ENCODE measurements at regions of chr9 and their contacts with region 1.

Region 1: DNA sequence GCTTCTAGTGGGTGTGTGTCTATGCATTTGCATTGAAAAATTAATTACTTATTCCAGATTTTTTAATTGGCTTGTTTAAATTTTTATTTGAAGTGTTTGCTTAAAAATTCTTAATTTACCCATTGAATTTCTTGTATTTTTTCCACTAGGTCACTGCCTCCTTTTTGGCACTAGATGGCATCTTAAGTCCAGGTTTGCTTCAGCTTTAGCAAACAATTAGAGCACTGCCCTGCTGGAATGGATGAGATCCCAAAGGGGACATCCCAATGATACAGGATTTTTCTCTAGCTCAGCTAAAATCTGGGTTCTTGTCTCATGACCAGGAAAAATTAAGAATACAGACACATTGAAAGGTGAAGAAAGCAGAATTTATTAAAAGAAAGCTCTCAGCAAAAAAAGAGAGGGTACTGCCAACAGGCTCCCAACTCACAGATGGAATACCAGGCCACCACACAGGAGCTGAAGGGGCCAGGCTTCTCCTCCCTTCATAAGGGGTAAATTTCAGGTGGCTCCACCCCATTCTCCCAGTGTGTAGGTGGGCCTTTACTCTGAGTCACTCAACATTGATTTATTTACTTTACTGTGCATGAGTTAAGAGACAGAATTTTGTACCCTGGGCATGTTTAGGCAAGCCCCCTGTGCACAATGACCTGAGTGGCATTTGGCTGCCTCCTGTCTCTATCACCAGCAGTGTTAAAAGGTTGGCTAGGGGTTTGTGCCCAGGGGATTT is 532.4 kb downstream of the ANXA1 start:
- DNase-seq: no peak
- ATAC-seq: peak; percentile 94
- H3K4me3 Mint-ChIP-seq: no peak overlapping the region
- H3K27ac Mint-ChIP-seq: peak overlapping the region; percentile 60; the same call in 1 of the 2 replicates
- H3K4me1 Mint-ChIP-seq: peaks cover 12% of the 10 kb centered on the region
- H3K27me3 Mint-ChIP-seq: no peaks in the 10 kb centered on the region
- CTCF ChIP-seq: peak; percentile 52

Region 2: DNA sequence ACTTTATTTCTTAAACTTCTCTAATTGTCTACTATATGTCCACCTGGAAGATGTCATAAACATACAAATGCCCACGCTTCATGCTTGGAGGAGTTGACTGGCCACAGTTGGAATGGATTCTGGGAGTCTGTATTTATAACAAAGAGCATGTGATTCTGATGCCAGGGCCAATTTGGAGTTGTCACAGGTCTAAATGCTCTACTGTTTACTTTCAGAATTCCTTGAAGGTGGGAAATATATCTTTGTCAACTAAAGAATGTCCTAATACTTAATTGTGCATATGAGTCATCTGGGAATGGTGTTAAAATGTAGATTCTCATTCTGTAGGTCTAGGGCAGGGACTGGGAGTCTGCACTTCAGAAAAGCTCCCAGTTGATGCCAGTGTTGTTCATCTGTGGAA is 336.3 kb before region 1 on chr9:
- CTCF ChIA-PET with region 1: no interaction called
- POLR2A ChIA-PET with region 1: no interaction called
- DNase-seq: no peak
- ATAC-seq: no peak
- H3K4me3 Mint-ChIP-seq: no peak overlapping the region
- H3K27ac Mint-ChIP-seq: no peak overlapping the region
- H3K4me1 Mint-ChIP-seq: no peaks in the 10 kb centered on the region
- H3K27me3 Mint-ChIP-seq: no peaks in the 10 kb centered on the region
- CTCF ChIP-seq: no peak

Region 3: DNA sequence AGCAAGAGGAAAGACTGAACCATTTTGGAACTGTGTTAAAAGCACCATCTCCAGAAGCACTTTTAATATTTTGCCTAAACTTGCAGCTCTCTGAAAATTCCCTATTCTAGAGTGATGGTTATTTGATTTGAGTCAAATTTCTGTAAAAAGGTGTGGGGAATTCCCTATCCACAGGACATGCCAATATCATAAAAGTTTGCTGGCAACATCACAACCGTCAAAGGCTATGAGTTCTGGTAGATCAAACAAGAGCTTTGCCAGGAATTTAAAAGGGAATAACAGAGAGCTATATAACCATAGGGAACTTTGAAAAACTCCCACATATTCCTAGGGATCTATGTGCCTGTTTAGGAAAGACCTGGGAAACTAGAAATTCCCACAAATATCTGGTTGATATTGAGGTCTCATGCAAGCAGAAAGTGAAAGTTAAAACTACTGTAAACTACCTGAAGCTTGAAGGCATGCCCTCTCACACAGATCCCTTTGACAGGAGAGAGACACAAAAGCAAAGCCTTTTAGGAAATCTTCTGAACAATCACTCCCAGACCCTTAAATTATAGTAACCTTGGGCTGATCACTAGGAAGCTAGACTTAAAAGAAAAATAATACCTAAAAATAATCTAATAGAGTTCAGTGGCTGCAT is 17.5 kb after region 1 on chr9:
- CTCF ChIA-PET with region 1: no interaction called
- POLR2A ChIA-PET with region 1: no interaction called
- DNase-seq: no peak
- ATAC-seq: no peak
- H3K4me3 Mint-ChIP-seq: no peak overlapping the region
- H3K27ac Mint-ChIP-seq: no peak overlapping the region
- H3K4me1 Mint-ChIP-seq: 0 out of 2 replicates have a peak, but pooled peaks cover 8% of the 10 kb centered on the region
- H3K27me3 Mint-ChIP-seq: no peaks in the 10 kb centered on the region
- CTCF ChIP-seq: no peak

Region 4: DNA sequence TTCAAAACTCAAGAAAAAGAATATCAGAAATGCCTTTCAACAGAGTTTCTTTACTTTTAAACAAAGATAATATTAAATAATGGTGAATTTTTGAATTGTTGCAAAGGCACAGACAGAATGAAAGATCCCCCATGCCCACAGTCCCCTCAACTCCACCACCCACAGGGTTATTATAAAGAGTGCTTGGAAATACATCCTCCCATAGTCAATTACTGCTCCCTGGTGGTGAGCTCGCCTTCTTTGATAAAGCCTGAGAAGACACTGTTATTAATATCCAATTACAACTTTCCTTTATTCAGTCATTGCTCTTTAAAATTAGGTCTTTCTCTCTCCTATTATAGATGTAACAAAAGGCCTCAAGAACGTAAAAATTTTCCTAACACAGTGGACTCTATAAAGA is 322.9 kb after region 1 on chr9:
- CTCF ChIA-PET with region 1: interaction called, 10 read pairs
- POLR2A ChIA-PET with region 1: no interaction called
- DNase-seq: no peak
- ATAC-seq: peak; percentile 78
- H3K4me3 Mint-ChIP-seq: no peak overlapping the region
- H3K27ac Mint-ChIP-seq: no peak overlapping the region
- H3K4me1 Mint-ChIP-seq: peaks cover 8% of the 10 kb centered on the region
- H3K27me3 Mint-ChIP-seq: no peaks in the 10 kb centered on the region
- CTCF ChIP-seq: no peak

Measured in WTC11 (cell line).